ENCODE measurements at regions of chr7 and their contacts with region 1.

Region 1: GRCh38 chr7:105298439-105298907 is 90.2 kb downstream of the SRPK2 start:
- DNase-seq: peak; percentile 23
- H3K4me3 Mint-ChIP-seq: peak overlapping the region; percentile 45
- H3K27ac Mint-ChIP-seq: peak overlapping the region; percentile 92
- H3K4me1 Mint-ChIP-seq: peaks cover 50% of the 10 kb centered on the region
- H3K27me3 Mint-ChIP-seq: no peaks in the 10 kb centered on the region

Region 2: DNA sequence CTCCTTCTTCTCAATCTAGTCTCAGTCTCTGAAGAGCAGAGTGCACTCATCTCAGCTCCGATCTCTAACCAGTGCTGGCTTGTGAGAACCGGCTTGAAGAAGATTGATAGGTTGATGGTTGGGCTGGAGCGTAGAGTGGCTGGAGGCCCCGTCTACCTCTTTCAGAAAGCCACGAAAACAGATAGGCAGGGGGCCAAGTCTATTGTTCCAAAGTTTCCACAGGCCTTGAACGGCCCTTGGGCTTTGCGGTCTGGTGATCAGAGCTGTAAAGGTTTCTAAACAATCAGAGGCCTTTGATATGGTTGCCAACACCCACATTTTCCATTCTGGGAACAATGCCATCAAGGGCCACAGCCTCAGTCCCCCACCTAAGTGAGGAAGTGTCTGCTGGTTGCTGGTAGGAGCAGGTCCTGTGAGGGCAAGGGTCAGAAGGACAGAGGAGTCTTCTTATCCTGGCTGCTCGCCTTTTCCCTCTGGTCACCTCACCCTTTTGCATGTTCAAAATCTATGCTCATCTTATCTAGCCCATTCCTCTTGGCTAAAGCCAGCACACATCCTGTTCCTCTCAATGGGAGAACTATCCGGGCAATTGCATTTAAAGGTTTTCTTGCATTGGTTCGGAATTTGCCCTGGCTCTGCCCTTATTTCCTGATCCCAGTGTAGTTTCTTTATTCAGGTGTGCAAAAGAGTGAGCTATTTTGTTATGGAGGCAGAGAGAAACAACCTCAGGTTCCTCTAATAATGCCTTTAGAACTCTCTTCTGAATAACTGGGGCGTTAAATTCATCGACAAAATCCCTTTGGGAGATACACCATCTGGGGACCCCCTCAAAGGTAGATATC is 354.8 kb before region 1 on chr7:
- intact Hi-C with region 1: loop called (anchors 2 kb)
- DNase-seq: peak; percentile 78
- H3K4me3 Mint-ChIP-seq: peak overlapping the region; percentile 97
- H3K27ac Mint-ChIP-seq: peak overlapping the region; percentile 99
- H3K4me1 Mint-ChIP-seq: peaks cover 50% of the 10 kb centered on the region
- H3K27me3 Mint-ChIP-seq: no peaks in the 10 kb centered on the region

Region 3: GRCh38 chr7:105209870-105210269 is 88.6 kb before region 1 on chr7:
- intact Hi-C with region 1: loop called (anchors 5 kb)
- DNase-seq: no peak
- H3K4me3 Mint-ChIP-seq: no peak overlapping the region
- H3K27ac Mint-ChIP-seq: no peak overlapping the region
- H3K4me1 Mint-ChIP-seq: peaks cover 62% of the 10 kb centered on the region
- H3K27me3 Mint-ChIP-seq: no peaks in the 10 kb centered on the region

Region 4: DNA sequence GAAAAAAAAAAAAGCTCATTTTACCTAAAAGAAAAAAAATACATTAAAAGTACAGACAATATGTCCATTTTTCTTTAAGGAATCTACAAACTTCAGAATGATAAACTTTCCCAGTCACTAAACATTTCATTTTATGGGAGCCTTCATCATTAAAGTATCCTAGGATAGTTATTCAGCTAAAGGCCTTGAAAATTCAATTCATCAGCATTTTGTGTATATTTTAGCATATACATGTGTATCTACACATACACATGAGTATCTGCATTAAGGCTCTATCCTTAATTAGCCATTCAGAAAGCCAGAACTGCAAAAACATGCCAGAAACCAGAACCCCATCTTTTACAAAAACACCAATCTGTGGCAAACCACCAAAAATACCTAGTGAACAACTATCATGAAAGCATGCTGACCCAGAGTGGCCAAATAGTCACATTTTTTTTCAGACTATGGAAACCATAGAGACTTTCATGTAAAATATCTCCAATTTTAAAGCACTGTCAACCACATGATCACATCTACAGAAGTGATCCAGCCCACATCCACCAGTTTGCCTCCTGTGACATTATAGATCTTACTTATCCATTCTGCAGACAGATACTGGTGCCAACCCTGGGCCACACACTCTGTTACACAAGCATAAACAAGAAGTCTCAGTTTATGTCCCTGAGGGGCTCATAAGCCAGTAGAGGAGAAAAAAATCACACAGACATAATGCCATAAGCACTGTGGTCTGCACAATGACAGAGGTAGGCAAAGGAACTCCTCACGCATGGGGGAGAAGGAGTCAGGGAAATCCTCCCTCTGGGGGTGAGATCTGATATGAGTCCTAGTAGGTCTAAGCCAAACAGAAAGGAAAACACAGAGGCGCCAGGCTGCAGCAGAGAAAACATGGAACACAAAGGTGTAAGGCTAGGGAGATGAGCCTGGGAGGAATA is 11.0 kb after region 1 on chr7:
- intact Hi-C with region 1: loop called (anchors 1 kb)
- DNase-seq: no peak
- H3K4me3 Mint-ChIP-seq: no peak overlapping the region
- H3K27ac Mint-ChIP-seq: peak overlapping the region; percentile 44
- H3K4me1 Mint-ChIP-seq: peaks cover 52% of the 10 kb centered on the region
- H3K27me3 Mint-ChIP-seq: no peaks in the 10 kb centered on the region

Region 5: DNA sequence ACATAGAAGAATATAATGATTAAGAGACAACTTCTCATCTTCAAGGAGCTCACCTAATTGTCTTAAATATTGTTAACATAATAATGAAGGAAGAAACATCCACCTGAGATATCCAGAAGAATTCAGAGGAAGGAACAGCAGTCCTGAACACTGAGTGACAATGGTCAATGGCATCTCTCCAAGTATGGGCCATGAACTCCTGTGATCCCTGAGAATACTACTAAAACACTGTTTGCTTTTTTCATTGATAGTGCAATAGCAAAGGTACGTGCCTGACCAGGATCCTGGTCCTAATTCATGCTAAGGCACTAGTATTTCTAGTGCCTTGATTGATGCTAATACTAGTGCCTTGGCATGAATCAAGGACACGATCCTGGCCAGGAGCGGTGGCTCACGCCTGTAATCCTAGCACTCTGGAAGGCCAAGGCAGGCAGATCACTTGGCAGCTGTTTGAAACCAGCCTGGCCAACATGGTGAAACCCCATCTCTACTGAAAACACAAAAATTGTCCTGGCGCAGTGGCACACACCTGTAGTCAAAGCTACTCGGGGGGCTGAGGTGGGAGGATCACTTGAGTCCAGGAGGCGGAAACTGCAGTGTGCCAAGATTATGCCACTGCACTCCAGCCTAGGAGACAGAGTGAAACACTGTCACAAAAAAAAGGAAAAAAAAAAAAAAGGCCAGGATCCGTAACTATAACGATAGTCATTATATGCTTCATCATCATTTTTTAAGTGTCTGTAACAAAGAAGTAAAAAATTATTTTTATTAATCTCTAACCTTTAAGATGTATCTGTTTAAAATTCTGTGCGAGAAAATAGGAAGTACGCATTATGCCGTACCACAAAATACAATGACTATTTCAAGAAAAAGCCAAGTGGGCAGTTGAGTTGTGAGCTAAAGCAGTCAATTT is 41.2 kb after region 1 on chr7:
- intact Hi-C with region 1: no loop called
- DNase-seq: no peak
- H3K4me3 Mint-ChIP-seq: no peak overlapping the region
- H3K27ac Mint-ChIP-seq: no peak overlapping the region
- H3K4me1 Mint-ChIP-seq: peaks cover 9% of the 10 kb centered on the region
- H3K27me3 Mint-ChIP-seq: no peaks in the 10 kb centered on the region

Region 6: GRCh38 chr7:105387621-105388372 is 89.3 kb after region 1 on chr7:
- intact Hi-C with region 1: loop called (anchors 5 kb)
- DNase-seq: peak; percentile 37
- H3K4me3 Mint-ChIP-seq: peak overlapping the region; percentile 88
- H3K27ac Mint-ChIP-seq: peak overlapping the region; percentile 80
- H3K4me1 Mint-ChIP-seq: peaks cover 21% of the 10 kb centered on the region
- H3K27me3 Mint-ChIP-seq: no peaks in the 10 kb centered on the region

Measured in activated T-helper 2 cell treated with anti-CD3 and anti-CD28 coated beads, Interferon-gamma antibody, Interleukin-2, Interleukin-4, amounts not matched to agents 10 μg/mL and 5 μg/mL and 100 μg/mL, durations not matched to agents 14 hours and 24 hours and 36 hours (primary cell).